ENCODE measurements at regions of chr2 and their contacts with region 1.

Region 1: DNA sequence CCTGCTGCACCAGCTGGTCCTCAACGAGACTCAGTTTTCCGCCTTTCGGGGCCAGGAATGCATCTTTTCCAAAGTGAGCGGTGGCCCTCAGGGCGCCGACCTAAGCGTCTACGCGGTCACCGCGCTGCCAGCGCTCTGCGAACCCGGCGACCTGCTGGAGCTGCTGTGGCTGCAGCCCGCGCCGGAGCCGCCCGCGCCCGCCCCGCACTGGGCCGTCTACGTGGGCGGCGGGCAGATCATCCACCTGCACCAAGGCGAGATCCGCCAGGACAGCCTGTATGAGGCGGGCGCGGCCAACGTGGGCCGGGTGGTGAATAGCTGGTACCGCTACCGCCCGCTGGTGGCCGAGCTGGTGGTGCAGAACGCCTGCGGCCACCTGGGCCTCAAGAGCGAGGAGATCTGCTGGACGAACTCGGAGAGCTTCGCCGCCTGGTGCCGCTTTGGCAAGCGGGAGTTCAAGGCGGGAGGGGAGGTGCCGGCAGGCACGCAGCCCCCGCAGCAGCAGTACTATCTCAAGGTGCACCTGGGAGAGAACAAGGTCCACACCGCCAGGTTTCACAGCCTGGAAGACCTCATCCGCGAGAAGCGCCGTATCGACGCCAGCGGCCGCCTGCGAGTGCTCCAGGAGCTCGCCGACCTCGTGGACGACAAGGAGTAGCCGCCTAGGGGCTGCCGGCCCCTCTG is 1.8 kb downstream of the LRATD1 start:
- DNase-seq: peak; percentile 36 to 88 (median 80)
- H3K4me3 ChIP-seq: peak overlapping the region; percentile 44 to 83 (median 68)
- H3K27ac ChIP-seq: peak overlapping the region in 58 of 59 donors; percentile 6 to 92 (median 84)
- H3K27me3 ChIP-seq: peaks cover 0 to 10% (median 0%) of the 10 kb centered on the region in 45 donors
- CTCF ChIP-seq: peak; percentile 40 to 81 (median 66)

Region 2: DNA sequence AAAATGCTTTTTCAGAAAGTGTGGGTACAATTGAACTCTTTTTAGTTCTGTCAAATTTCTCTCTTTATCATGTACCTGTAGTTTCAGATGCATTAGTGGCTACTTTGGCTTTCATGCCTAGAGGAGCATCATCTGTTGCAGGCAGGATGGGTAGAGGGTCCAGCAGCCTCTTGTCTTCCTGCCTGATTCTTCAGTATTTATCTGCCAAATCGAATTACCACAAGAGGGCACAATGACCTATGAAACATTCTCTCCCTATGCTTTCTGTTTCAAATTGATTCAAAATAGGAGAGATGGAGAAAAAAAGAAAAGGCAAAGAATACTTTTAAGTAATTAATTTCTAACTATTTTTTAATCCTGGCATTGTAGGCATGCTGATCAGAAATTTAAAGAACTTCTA is 1440.4 kb before region 1 on chr2:
- intact Hi-C with region 1: loop called in 1 of 2 experiments (anchors 10 kb)
- DNase-seq: no peak
- H3K4me3 ChIP-seq: no peak overlapping the region
- H3K27ac ChIP-seq: no peak overlapping the region
- H3K27me3 ChIP-seq: peaks cover 0 to 9% (median 0%) of the 10 kb centered on the region in 45 donors
- CTCF ChIP-seq: peak in 55 of 56 donors; percentile 26 to 70 (median 49)

Region 3: GRCh38 chr2:14428056-14428455 is 206.3 kb before region 1 on chr2:
- intact Hi-C with region 1: loop called in 1 of 2 experiments (anchors 5 kb)
- DNase-seq: peak in 1 of 10 donors; percentile 25
- H3K4me3 ChIP-seq: no peak overlapping the region
- H3K27ac ChIP-seq: no peak overlapping the region
- H3K27me3 ChIP-seq: no peaks in the 10 kb centered on the region
- CTCF ChIP-seq: peak in 47 of 56 donors; percentile 9 to 61 (median 36)

Region 4: GRCh38 chr2:14944562-14945346 is 310.4 kb after region 1 on chr2:
- intact Hi-C with region 1: loop called in 1 of 2 experiments (anchors 10 kb)
- DNase-seq: no peak
- H3K4me3 ChIP-seq: no peak overlapping the region
- H3K27ac ChIP-seq: no peak overlapping the region
- H3K27me3 ChIP-seq: no peaks in the 10 kb centered on the region
- CTCF ChIP-seq: peak in 4 of 56 donors; percentile 10 to 29 (median 12)

Region 5: GRCh38 chr2:15159751-15160177 is 525.4 kb after region 1 on chr2:
- intact Hi-C with region 1: loop called in 1 of 2 experiments (anchors 5 kb)
- DNase-seq: peak in 1 of 10 donors; percentile 52
- H3K4me3 ChIP-seq: no peak overlapping the region
- H3K27ac ChIP-seq: peak overlapping the region in 1 of 59 donors; percentile 48
- H3K27me3 ChIP-seq: no peaks in the 10 kb centered on the region
- CTCF ChIP-seq: peak; percentile 30 to 79 (median 66)

Region 6: GRCh38 chr2:15560988-15561573 is 926.7 kb after region 1 on chr2 and contains the start of gene NBAS:
- intact Hi-C with region 1: loop called in 1 of 2 experiments (anchors 10 kb)
- DNase-seq: peak; percentile 74 to 92 (median 86)
- H3K4me3 ChIP-seq: peak within 1 kb of the TSS; percentile 50 to 91 (median 82)
- H3K27ac ChIP-seq: peak within 1 kb of the TSS in 55 of 59 donors; percentile 30 to 89 (median 78)
- H3K27me3 ChIP-seq: no peaks in the 10 kb centered on the region
- CTCF ChIP-seq: peak in 24 of 56 donors; percentile 5 to 47 (median 22)
- total RNA-seq, gene NBAS: 54.5 to 99.1 (median 74.0) TPM

Region 7: GRCh38 chr2:15577071-15577735 is 942.9 kb after region 1 on chr2:
- intact Hi-C with region 1: loop called in 1 of 2 experiments (anchors 10 kb)
- DNase-seq: peak; percentile 61 to 93 (median 86)
- H3K4me3 ChIP-seq: no peak overlapping the region
- H3K27ac ChIP-seq: no peak overlapping the region
- H3K27me3 ChIP-seq: peaks cover 0 to 3% (median 0%) of the 10 kb centered on the region in 45 donors
- CTCF ChIP-seq: peak; percentile 46 to 87 (median 78)